CD4-positive, alpha-beta memory T cell (primary cell): ENCODE measurements at regions of chr7 and their contacts with region 1.

Region 1: GRCh38 chr7:81482600-81483186 is 287.2 kb downstream of the HGF start:
- DNase-seq: no peak
- H3K4me3 ChIP-seq: no peak overlapping the region
- H3K4me3 Mint-ChIP-seq: no peak overlapping the region
- H3K27ac ChIP-seq: no peak overlapping the region
- H3K27ac Mint-ChIP-seq: no peak overlapping the region
- H3K4me1 ChIP-seq: no peaks in the 10 kb centered on the region
- H3K4me1 Mint-ChIP-seq: no peaks in the 10 kb centered on the region
- H3K27me3 ChIP-seq: no peaks in the 10 kb centered on the region
- H3K27me3 Mint-ChIP-seq: no peaks in the 10 kb centered on the region

Region 2: GRCh38 chr7:81833401-81833800 is 350.7 kb after region 1 on chr7:
- CTCF ChIA-PET with region 1: no interaction called
- POLR2A ChIA-PET with region 1: no interaction called
- intact Hi-C with region 1: no loop called
- DNase-seq: no peak
- H3K4me3 ChIP-seq: no peak overlapping the region
- H3K4me3 Mint-ChIP-seq: no peak overlapping the region
- H3K27ac ChIP-seq: no peak overlapping the region
- H3K27ac Mint-ChIP-seq: no peak overlapping the region
- H3K4me1 ChIP-seq: no peaks in the 10 kb centered on the region
- H3K4me1 Mint-ChIP-seq: no peaks in the 10 kb centered on the region
- H3K27me3 ChIP-seq: no peaks in the 10 kb centered on the region
- H3K27me3 Mint-ChIP-seq: no peaks in the 10 kb centered on the region

Region 3: DNA sequence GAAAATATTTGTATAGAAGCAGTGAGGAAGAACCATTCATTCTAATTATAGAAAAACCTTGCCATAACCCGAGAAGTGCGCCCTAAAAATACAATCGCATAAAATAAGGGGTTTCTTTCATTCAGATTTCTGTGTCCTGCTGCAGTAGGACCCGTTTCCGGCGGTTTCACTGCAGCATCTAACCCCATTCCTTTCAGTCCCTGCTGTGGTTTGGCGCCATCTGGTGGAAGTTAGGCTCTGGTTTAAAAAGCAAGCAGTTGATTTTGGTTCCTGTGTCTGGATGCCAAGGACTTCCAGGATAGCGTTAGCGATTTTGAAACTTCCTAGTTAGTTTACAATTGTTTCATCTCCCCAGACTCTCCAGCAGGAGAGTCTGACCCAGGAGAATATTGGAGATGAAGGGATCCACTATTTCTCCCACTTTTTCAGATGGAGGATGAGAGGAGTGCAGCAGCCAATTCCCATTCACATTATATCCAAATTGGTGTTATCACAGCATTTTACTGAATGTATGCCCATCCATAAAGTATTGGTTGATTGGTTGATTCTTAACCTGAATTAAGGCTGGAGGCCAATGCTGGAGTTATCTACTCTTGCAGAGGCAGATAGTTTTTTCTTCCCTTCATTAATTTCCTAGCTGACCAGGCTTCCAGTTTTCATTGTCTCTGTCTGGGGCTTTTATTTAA is 1089.6 kb after region 1 on chr7:
- CTCF ChIA-PET with region 1: no interaction called
- POLR2A ChIA-PET with region 1: no interaction called
- intact Hi-C with region 1: loop called (anchors 2 kb)
- DNase-seq: peak; percentile 20 to 47 (median 29)
- H3K4me3 ChIP-seq: no peak overlapping the region
- H3K4me3 Mint-ChIP-seq: no peak overlapping the region
- H3K27ac ChIP-seq: no peak overlapping the region
- H3K27ac Mint-ChIP-seq: no peak overlapping the region
- H3K4me1 ChIP-seq: no peaks in the 10 kb centered on the region
- H3K4me1 Mint-ChIP-seq: peaks cover 0 to 4% (median 0%) of the 10 kb centered on the region in 4 donors
- H3K27me3 ChIP-seq: no peaks in the 10 kb centered on the region
- H3K27me3 Mint-ChIP-seq: no peaks in the 10 kb centered on the region